ENCODE measurements at regions of chr6 and their contacts with region 1.

Region 1: GRCh38 chr6:24494821-24495795 is at the start of gene ALDH5A1:
- DNase-seq: no peak
- ATAC-seq: peak; percentile 88
- H3K4me3 ChIP-seq: peak within 1 kb of the TSS; percentile 53 to 56
- H3K27ac ChIP-seq: no peak within 1 kb of the TSS
- H3K4me1 ChIP-seq: peaks cover 5% of the 10 kb centered on the region; the same call in 1 of the 2 replicates
- H3K27me3 ChIP-seq: peaks cover 6% of the 10 kb centered on the region
- CTCF ChIP-seq: peak; percentile 67
- total RNA-seq, gene ALDH5A1: 4.2 TPM

Region 2: GRCh38 chr6:23532227-23532626 is 962.9 kb before region 1 on chr6:
- CTCF ChIA-PET with region 1: no interaction called
- POLR2A ChIA-PET with region 1: no interaction called
- in situ Hi-C with region 1: no loop called
- intact Hi-C with region 1: no loop called
- DNase-seq: no peak
- ATAC-seq: no peak
- H3K4me3 ChIP-seq: no peak overlapping the region
- H3K27ac ChIP-seq: no peak overlapping the region
- H3K4me1 ChIP-seq: no peaks in the 10 kb centered on the region
- H3K27me3 ChIP-seq: no peaks in the 10 kb centered on the region
- CTCF ChIP-seq: no peak

Region 3: GRCh38 chr6:23713211-23713610 is 781.9 kb before region 1 on chr6:
- CTCF ChIA-PET with region 1: no interaction called
- POLR2A ChIA-PET with region 1: interaction called, 12 read pairs
- in situ Hi-C with region 1: no loop called
- intact Hi-C with region 1: no loop called
- DNase-seq: no peak
- ATAC-seq: no peak
- H3K4me3 ChIP-seq: no peak overlapping the region
- H3K27ac ChIP-seq: no peak overlapping the region
- H3K4me1 ChIP-seq: no peaks in the 10 kb centered on the region
- H3K27me3 ChIP-seq: no peaks in the 10 kb centered on the region
- CTCF ChIP-seq: no peak

Region 4: DNA sequence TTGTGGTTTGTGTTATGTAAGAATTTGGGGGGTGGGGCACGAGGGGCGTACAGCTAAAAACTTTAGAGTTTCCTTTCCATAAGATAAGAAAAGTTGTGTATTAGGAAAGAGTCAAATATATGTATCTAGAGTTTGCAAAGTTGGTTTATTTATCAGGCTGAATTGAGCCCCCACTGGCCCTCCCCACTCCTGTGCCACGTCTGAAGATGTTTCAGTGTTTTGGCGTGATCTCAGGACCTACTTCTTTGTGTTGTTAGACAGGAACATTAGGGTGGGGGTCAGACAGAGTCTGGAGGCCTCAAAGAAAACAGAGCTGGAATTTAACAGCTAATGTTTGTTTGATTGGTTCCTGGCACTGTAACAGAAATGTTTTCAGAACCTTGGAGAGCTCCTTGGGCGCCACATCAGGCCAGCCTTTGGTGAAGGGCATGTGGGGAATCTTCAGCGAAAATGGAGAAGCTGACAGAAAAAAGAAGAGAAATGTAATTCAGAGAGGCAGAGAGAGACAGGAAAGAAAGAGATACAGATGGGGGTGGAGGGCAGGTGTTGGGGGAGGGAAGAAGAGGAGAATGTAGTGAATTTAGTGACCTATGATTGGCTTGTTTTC is 368.4 kb before region 1 on chr6:
- CTCF ChIA-PET with region 1: no interaction called
- POLR2A ChIA-PET with region 1: no interaction called
- in situ Hi-C with region 1: no loop called
- intact Hi-C with region 1: no loop called
- DNase-seq: no peak
- ATAC-seq: no peak
- H3K4me3 ChIP-seq: no peak overlapping the region; a peak in 1 of 4 replicates
- H3K27ac ChIP-seq: no peak overlapping the region
- H3K4me1 ChIP-seq: no peaks in the 10 kb centered on the region
- H3K27me3 ChIP-seq: peaks cover 2% of the 10 kb centered on the region
- CTCF ChIP-seq: no peak

Measured in Panc1 (cell line).